ENCODE measurements at regions of chr3 and their contacts with region 1.

Region 1: GRCh38 chr3:122824465-122825381 is 29.9 kb downstream of the SLC49A4 start:
- DNase-seq: no peak
- ATAC-seq: no peak
- H3K4me3 ChIP-seq: no peak overlapping the region
- H3K27ac ChIP-seq: no peak overlapping the region
- H3K4me1 ChIP-seq: no peaks in the 10 kb centered on the region
- H3K27me3 ChIP-seq: no peaks in the 10 kb centered on the region
- CTCF ChIP-seq: no peak

Region 2: GRCh38 chr3:122810734-122811133 is 14.0 kb before region 1 on chr3:
- CTCF ChIA-PET with region 1: no interaction called
- POLR2A ChIA-PET with region 1: interaction called, 15 read pairs
- in situ Hi-C with region 1: no loop called
- intact Hi-C with region 1: no loop called
- DNase-seq: no peak
- ATAC-seq: no peak
- H3K4me3 ChIP-seq: no peak overlapping the region
- H3K27ac ChIP-seq: no peak overlapping the region
- H3K4me1 ChIP-seq: no peaks in the 10 kb centered on the region
- H3K27me3 ChIP-seq: no peaks in the 10 kb centered on the region
- CTCF ChIP-seq: no peak

Region 3: GRCh38 chr3:123218990-123219389 is 394.3 kb after region 1 on chr3:
- CTCF ChIA-PET with region 1: no interaction called
- POLR2A ChIA-PET with region 1: no interaction called
- in situ Hi-C with region 1: no loop called
- intact Hi-C with region 1: no loop called
- DNase-seq: no peak
- ATAC-seq: no peak
- H3K4me3 ChIP-seq: no peak overlapping the region
- H3K27ac ChIP-seq: no peak overlapping the region
- H3K4me1 ChIP-seq: no peaks in the 10 kb centered on the region
- H3K27me3 ChIP-seq: no peaks in the 10 kb centered on the region
- CTCF ChIP-seq: no peak

Measured in Panc1 (cell line).